B cell (primary cell): ENCODE measurements at regions of chr2 and their contacts with region 1.

Region 1: GRCh38 chr2:130797493-130798435 is 39.0 kb upstream of the ARHGEF4 start:
- DNase-seq: peak; percentile 90
- ATAC-seq: peak; percentile 93
- H3K4me3 ChIP-seq: peak overlapping the region; percentile 30 to 92 (median 82)
- H3K4me3 Mint-ChIP-seq: peak overlapping the region; percentile 81
- H3K27ac ChIP-seq: peak overlapping the region; percentile 64 to 65
- H3K27ac Mint-ChIP-seq: peak overlapping the region; percentile 41
- H3K4me1 ChIP-seq: peaks cover 7 to 14% of the 10 kb centered on the region in 2 donors
- H3K4me1 Mint-ChIP-seq: peaks cover 5% of the 10 kb centered on the region
- H3K27me3 ChIP-seq: peaks cover 0 to 5% (median 0%) of the 10 kb centered on the region in 4 experiments
- H3K27me3 Mint-ChIP-seq: peaks cover 4% of the 10 kb centered on the region
- CTCF ChIP-seq: peak; percentile 78

Region 2: GRCh38 chr2:130824492-130825061 is 26.8 kb after region 1 on chr2:
- CTCF ChIA-PET with region 1: interaction called, 15 read pairs
- POLR2A ChIA-PET with region 1: no interaction called
- intact Hi-C with region 1: loop called (anchors 1 kb)
- DNase-seq: peak; percentile 59
- ATAC-seq: peak; percentile 90
- H3K4me3 ChIP-seq: no peak overlapping the region
- H3K4me3 Mint-ChIP-seq: peak overlapping the region; percentile 64
- H3K27ac ChIP-seq: no peak overlapping the region
- H3K27ac Mint-ChIP-seq: peak overlapping the region; percentile 89
- H3K4me1 ChIP-seq: peaks cover 0 to 17% of the 10 kb centered on the region in 2 donors
- H3K4me1 Mint-ChIP-seq: peaks cover 16% of the 10 kb centered on the region
- H3K27me3 ChIP-seq: no peaks in the 10 kb centered on the region
- H3K27me3 Mint-ChIP-seq: peaks cover 3% of the 10 kb centered on the region
- CTCF ChIP-seq: no peak

Region 3: DNA sequence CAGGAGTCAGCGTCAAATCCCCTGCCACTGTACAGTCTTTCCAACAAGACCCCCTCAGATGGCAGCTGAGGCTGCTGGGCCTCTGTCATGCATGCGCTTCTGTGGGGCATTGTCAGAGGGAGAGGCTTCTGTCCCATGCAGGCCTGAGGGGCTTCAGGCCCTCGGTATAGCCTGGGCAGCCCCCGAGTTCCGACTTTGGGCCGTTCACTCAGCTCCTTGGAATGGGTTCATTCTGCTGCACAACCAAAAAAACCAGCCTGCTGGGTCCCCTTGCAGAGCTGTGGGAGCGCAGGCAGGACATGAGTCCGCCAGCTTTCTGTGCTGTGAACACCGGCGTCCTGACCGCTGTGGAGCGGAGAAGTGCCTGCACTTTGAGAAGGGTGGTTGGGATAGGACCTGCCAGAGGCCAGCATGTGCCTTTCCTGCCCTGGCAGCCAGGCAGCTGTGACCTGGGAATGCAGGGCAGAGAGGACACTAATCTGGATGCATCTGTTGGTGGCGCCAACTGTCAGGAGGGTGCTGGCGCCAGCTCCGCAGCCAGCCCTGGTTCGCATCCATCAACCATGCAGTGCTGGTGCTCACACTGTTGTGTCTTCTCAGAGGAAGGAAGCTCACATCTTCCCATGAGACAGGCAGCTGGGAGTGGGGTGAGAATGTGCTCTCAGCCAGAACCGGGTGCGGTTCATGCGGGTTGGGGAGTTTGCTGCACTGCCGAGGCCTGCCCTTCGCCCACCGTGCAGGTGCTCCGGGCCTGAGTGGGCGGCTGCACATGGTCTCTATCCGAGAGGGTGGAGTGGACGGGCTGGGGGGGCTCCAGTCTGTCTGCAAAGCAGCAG is 53.2 kb after region 1 on chr2:
- CTCF ChIA-PET with region 1: interaction called, 10 read pairs
- POLR2A ChIA-PET with region 1: no interaction called
- intact Hi-C with region 1: no loop called
- DNase-seq: no peak
- ATAC-seq: peak; percentile 60
- H3K4me3 ChIP-seq: no peak overlapping the region
- H3K4me3 Mint-ChIP-seq: no peak overlapping the region
- H3K27ac ChIP-seq: no peak overlapping the region
- H3K27ac Mint-ChIP-seq: no peak overlapping the region
- H3K4me1 ChIP-seq: peaks cover 0 to 14% of the 10 kb centered on the region in 2 donors
- H3K4me1 Mint-ChIP-seq: peaks cover 15% of the 10 kb centered on the region
- H3K27me3 ChIP-seq: peaks cover 0 to 3% (median 0%) of the 10 kb centered on the region in 4 experiments
- H3K27me3 Mint-ChIP-seq: peaks cover 10% of the 10 kb centered on the region
- CTCF ChIP-seq: no peak

Region 4: DNA sequence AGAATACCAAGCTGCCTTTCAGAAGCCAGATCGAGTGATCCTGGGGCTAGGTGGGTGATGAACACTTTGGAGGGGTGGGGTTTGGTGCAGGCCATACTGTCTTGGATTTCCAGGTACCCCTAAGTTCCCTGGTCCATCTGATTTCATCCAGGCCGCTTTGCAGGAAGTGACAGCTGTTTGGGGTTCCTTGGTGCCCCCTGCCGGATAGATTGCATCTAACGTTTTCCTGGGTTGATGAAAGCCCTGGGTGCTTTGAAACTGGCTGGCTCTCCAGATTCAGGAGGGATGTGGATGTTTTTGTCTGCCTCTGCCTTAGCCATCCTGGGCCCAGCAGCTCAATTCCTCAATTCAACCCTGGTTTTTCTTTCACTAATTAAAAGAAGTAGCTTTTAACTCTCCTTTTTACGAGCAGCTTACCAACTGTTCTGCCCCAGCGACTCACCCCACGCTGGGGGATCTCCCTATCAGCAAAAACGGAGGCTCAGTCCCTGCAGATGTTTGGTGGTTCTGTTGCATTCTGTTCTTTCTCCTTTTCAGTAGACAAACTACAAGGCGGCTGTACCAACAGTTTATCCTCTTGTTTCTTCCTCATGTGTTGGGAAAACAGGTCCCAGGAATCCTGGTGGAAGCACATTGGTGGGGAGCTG is 76.1 kb after region 1 on chr2:
- CTCF ChIA-PET with region 1: interaction called, 210 read pairs
- POLR2A ChIA-PET with region 1: no interaction called
- intact Hi-C with region 1: loop called (anchors 1 kb)
- DNase-seq: peak; percentile 65
- ATAC-seq: peak; percentile 78
- H3K4me3 ChIP-seq: no peak overlapping the region
- H3K4me3 Mint-ChIP-seq: no peak overlapping the region
- H3K27ac ChIP-seq: no peak overlapping the region
- H3K27ac Mint-ChIP-seq: no peak overlapping the region
- H3K4me1 ChIP-seq: peaks cover 4 to 7% of the 10 kb centered on the region in 2 donors
- H3K4me1 Mint-ChIP-seq: peaks cover 8% of the 10 kb centered on the region
- H3K27me3 ChIP-seq: no peaks in the 10 kb centered on the region
- H3K27me3 Mint-ChIP-seq: peaks cover 12% of the 10 kb centered on the region
- CTCF ChIP-seq: peak; percentile 60

Region 5: DNA sequence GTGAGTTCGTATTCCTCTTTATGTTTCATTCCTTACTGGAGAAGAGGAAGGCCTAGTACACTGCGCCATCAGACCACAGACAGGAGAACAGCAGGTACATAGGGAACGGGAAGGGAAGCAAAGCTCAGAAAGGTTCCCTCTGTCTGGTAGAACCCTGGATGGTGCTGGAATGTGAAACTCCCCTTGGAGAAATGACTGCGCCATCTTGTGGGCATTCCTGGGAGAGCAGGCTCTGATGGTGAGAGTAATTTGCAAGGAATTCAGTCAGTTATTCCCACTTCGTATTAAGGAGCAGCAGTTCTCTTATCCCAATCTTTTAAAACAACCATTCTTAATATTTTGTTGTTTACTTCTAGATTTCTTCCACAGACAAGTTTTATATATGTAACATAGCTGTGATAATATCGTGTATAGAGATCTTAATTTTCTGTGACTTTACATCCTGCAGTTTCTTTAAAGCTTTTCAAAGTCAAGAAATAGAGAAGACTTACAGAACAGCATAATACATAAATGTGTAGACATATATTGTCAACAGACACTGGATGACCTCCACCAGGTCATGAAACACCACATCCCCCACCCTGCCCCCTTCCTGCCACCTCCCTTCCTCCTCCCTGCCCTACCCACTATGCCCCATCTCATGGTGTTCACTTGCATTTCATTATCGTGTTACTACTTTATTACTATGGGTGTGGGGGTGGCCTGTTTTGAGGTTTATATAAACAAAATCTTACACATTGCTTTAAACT is 122.8 kb after region 1 on chr2:
- CTCF ChIA-PET with region 1: interaction called, 28 read pairs
- POLR2A ChIA-PET with region 1: no interaction called
- intact Hi-C with region 1: loop called (anchors 1 kb)
- DNase-seq: peak; percentile 46
- ATAC-seq: no peak
- H3K4me3 ChIP-seq: no peak overlapping the region
- H3K4me3 Mint-ChIP-seq: no peak overlapping the region
- H3K27ac ChIP-seq: no peak overlapping the region
- H3K27ac Mint-ChIP-seq: no peak overlapping the region
- H3K4me1 ChIP-seq: no peaks in the 10 kb centered on the region
- H3K4me1 Mint-ChIP-seq: no peaks in the 10 kb centered on the region
- H3K27me3 ChIP-seq: no peaks in the 10 kb centered on the region
- H3K27me3 Mint-ChIP-seq: peaks cover 8% of the 10 kb centered on the region
- CTCF ChIP-seq: peak; percentile 79

Region 6: GRCh38 chr2:131093006-131093695 is 295.4 kb after region 1 on chr2 and contains the start of gene FAM168B:
- CTCF ChIA-PET with region 1: interaction called, 5 read pairs
- POLR2A ChIA-PET with region 1: no interaction called
- intact Hi-C with region 1: loop called (anchors 2 kb)
- DNase-seq: peak; percentile 93
- ATAC-seq: peak; percentile 76
- H3K4me3 ChIP-seq: peak within 1 kb of the TSS; percentile 67 to 99 (median 80)
- H3K4me3 Mint-ChIP-seq: peak within 1 kb of the TSS; percentile 94
- H3K27ac ChIP-seq: peak within 1 kb of the TSS; percentile 71 to 92
- H3K27ac Mint-ChIP-seq: peak within 1 kb of the TSS; percentile 93
- H3K4me1 ChIP-seq: peaks cover 7 to 16% of the 10 kb centered on the region in 2 donors
- H3K4me1 Mint-ChIP-seq: peaks cover 18% of the 10 kb centered on the region
- H3K27me3 ChIP-seq: no peaks in the 10 kb centered on the region
- H3K27me3 Mint-ChIP-seq: no peaks in the 10 kb centered on the region
- CTCF ChIP-seq: no peak
- total RNA-seq, gene FAM168B: 69.1 and 70.5 TPM in 2 replicates